Activated T-helper 1 cell treated with anti-CD3 and anti-CD28 coated beads, Interleukin-12 subunit alpha, Interleukin-12 subunit beta, Interleukin-2, Interleukin-4 antibody, amounts not matched to agents 30 ng/mL and 10 ng/mL and 1 ng/mL, durations not matched to agents 14 hours and 24 hours and 36 hours (primary cell): ENCODE measurements at regions of chr13 and their contacts with region 1.

Region 1: DNA sequence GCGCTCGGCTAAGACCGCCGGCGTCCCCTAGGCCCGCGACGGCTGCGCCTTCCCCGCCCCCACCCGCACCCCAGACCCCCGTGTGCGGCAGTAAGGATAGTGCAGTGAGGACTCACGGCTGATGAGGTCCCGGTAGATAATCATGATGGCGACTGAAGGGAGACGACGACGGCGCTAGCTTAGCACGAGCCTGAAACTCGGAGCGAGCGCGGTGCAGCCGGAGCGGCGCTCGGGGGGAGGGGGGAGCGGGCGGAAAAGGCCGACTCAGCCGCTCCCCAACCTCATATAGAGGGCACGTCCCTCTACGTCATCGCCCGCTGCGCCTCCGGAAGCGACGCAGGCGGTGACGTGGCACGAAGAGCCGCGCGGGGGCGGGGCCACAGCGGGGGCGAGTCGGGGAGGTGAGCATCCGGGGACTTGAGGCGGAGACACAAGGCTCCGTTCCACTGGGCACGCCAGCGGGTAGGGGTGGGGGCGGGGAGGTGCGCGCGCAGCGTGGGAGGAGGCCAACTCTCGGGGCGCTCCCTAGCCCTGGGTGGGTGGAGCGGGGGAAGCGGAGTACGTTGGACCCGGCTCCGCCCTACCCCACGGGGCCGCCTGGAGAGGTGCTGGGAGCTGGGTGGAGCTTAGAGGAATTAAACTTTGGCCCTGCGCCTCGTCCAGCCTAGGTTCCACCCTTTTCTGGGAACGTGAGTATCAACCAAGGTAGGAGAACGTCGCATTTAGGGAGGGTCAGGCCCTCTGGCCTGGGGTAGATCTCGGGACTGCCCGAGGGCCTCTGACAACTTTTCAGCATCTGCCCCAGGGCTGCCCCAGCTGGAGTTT is at the start of gene TPT1:
- DNase-seq: peak; percentile 99
- H3K4me3 Mint-ChIP-seq: peak within 1 kb of the TSS; percentile 99
- H3K27ac Mint-ChIP-seq: peak within 1 kb of the TSS; percentile 100
- H3K4me1 Mint-ChIP-seq: peaks cover 56% of the 10 kb centered on the region
- H3K27me3 Mint-ChIP-seq: no peaks in the 10 kb centered on the region
- total RNA-seq, gene TPT1: 2,353 and 2,360 TPM in 2 replicates

Region 2: DNA sequence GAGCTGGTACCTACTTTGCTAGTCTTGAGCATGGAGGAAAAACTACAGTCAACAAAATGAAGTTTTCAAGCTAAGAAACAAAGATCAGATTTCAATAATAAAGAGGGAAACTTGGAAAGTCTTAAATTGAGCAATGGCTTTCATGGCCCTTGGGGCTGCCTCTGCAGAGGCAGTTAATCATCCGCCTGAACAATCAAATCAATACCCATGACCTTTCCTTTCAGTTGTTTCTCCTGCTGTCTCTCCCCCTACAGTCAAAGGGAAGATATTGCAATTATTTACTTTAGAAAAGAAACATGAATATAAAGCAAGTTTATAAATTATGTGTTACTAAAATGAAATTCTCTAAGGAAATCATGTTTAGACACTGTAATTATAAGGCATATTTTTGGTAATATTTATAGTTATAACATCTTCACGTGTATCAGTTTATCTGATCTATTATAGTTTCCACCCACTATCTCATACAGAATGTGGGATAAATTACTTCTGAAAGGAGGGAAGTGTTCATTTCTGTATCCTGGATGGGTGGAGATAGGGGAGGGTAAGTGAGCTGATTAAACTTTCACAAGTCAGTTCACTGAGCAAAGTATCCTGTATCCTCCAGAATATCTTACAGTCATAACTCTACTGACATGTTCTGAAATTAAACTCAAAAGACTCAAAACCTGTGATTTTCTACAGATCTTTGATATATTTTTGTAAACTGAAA is 692.6 kb before region 1 on chr13:
- intact Hi-C with region 1: loop called (anchors 2 kb)
- DNase-seq: no peak
- H3K4me3 Mint-ChIP-seq: no peak overlapping the region
- H3K27ac Mint-ChIP-seq: peak overlapping the region; percentile 37
- H3K4me1 Mint-ChIP-seq: peaks cover 21% of the 10 kb centered on the region
- H3K27me3 Mint-ChIP-seq: peaks cover 9% of the 10 kb centered on the region

Region 3: DNA sequence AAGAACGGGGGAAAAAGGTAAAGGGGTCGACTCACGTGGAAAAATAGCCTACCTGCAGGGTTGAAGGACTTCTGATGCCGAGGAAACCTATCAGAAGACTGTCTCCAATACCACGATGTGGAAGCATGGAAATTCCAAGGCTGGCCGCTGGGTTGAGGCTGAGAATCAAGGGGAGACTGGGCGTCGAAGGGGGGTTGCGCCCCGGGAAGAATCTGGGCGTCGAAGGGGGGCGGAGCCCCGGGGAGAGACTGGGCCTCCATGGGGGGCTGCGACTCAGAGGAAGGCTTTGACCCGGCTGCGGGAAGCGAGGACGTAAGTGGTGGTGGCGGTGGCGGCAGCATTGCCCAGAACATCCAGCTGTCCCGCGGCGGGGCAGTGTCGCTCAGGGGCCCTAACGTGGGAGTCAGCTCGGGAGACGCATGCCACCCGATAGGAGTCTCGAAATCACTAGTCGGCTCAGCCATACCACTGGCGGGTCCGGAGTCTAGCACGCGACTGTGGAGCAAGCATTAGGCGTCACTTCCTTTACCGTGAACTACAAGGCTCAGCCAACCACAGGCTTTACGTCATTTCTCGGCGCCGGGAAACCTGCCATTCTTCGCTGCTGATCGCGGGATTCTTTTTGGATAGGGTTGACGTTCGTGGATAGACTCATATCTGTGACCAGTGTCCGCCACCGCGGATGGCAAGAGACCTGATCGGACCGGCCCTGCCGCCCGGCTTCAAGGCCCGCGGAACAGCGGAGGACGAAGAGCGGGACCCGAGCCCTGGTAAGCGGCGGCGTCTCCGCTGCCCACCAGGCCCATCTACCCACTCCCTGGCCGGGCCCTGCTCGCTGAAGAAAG is 351.9 kb before region 1 on chr13 and contains the starts of genes GPALPP1 and NUFIP1:
- intact Hi-C with region 1: loop called (anchors 1 kb)
- DNase-seq: peak; percentile 90
- H3K4me3 Mint-ChIP-seq: peak within 1 kb of the TSS; percentile 91
- H3K27ac Mint-ChIP-seq: peak within 1 kb of the TSS; percentile 91
- H3K4me1 Mint-ChIP-seq: peaks cover 43% of the 10 kb centered on the region
- H3K27me3 Mint-ChIP-seq: no peaks in the 10 kb centered on the region
- total RNA-seq, gene GPALPP1: 29.8 and 33.5 TPM in 2 replicates
- total RNA-seq, gene NUFIP1: 12.2 and 13.5 TPM in 2 replicates

Region 4: DNA sequence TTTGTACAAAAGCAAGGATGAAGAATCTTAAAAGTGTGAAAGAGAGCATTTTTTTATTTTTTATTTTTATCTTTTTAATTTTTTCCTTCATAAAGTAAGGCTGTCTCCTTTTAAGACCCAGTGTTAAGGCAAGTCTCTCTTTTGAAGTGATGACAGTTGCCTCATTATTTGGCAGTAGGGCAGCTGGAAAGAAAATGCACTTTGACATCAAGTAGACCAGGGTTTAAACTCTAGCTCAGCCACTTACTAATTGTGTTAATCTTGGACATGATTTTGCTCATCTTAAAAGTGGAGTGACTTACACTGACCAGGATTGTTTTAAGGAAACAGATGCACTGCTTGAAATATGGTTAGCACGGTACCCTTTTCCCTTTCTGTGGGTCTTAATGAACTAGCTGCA is 333.3 kb before region 1 on chr13:
- intact Hi-C with region 1: no loop called
- DNase-seq: no peak
- H3K4me3 Mint-ChIP-seq: no peak overlapping the region
- H3K27ac Mint-ChIP-seq: no peak overlapping the region
- H3K4me1 Mint-ChIP-seq: no peaks in the 10 kb centered on the region
- H3K27me3 Mint-ChIP-seq: no peaks in the 10 kb centered on the region

Region 5: DNA sequence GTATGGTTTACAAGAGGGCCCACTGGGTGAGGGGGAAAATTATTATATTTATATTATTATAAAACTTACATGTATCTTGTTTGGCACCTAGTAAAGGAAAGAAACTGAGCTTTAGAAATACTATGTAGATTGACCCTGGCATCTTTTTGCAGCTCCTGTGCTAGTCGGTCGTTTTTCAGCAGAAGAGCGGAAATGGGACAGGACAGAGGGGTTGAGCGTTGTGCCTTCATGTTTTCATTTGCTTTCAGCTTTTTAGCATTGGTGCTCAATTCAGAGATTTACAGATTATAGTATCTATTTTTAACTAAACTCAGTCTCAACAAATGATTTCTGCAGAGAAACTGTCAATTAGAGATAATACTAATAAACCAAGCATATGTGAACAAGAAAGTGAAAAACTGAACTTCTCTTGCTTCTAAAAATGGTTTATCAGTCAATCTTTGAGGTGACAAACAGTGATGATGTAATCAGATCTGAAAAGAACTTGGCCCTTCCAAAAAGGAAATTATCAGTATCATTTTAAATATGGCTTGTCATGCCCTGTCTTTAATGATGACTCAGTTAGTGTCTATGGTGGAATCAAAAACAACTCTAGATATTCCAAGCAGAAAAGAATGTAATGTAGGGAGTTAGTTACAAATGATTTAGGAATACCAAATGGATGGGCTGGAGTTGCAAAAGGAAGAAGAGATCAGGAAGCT is 83.3 kb before region 1 on chr13:
- intact Hi-C with region 1: no loop called
- DNase-seq: no peak
- H3K4me3 Mint-ChIP-seq: no peak overlapping the region
- H3K27ac Mint-ChIP-seq: no peak overlapping the region
- H3K4me1 Mint-ChIP-seq: peaks cover 20% of the 10 kb centered on the region
- H3K27me3 Mint-ChIP-seq: no peaks in the 10 kb centered on the region

Region 6: GRCh38 chr13:45310341-45311125 is 30.6 kb before region 1 on chr13:
- intact Hi-C with region 1: loop called (anchors 2 kb)
- DNase-seq: no peak
- H3K4me3 Mint-ChIP-seq: peak overlapping the region; percentile 78
- H3K27ac Mint-ChIP-seq: peak overlapping the region; percentile 44
- H3K4me1 Mint-ChIP-seq: peaks cover 18% of the 10 kb centered on the region
- H3K27me3 Mint-ChIP-seq: peaks cover 16% of the 10 kb centered on the region

Region 7: DNA sequence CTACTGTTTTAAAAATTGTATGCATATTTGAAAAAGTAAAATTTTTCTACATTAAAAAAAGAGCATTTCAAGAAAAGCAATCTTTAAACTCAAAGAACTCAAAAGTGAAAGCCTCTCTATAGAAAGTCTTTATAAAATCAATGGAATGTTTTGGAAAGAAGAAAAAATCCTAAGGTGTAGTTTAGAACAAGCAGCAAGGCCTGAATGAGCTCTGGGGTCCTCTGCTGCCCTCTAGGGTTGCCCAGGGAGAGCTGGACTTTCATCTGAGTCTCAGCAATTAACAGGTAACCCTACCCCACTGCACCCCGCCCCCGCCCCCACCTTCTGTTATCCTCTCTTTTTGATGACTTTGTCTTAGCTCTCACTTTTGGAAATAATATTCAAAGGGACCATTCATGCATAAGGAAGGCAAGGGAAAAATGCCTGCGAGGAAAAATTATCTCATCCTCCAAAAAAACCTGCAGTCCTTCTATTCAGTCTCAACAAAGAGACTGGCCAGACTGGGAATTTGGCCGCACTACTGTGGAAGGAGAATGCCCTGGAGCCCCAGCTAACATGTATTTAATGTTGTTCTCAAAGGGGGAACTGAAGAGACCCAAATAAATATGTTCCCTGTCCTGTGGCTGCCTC is 52.9 kb after region 1 on chr13:
- intact Hi-C with region 1: loop called (anchors 1 kb)
- DNase-seq: no peak
- H3K4me3 Mint-ChIP-seq: no peak overlapping the region
- H3K27ac Mint-ChIP-seq: no peak overlapping the region
- H3K4me1 Mint-ChIP-seq: peaks cover 51% of the 10 kb centered on the region
- H3K27me3 Mint-ChIP-seq: no peaks in the 10 kb centered on the region

Region 8: GRCh38 chr13:45464687-45465453 is 123.7 kb after region 1 on chr13 and contains the start of gene COG3:
- intact Hi-C with region 1: loop called (anchors 1 kb)
- DNase-seq: peak; percentile 94
- H3K4me3 Mint-ChIP-seq: peak within 1 kb of the TSS; percentile 95
- H3K27ac Mint-ChIP-seq: peak within 1 kb of the TSS; percentile 79
- H3K4me1 Mint-ChIP-seq: peaks cover 43% of the 10 kb centered on the region
- H3K27me3 Mint-ChIP-seq: peaks cover 11% of the 10 kb centered on the region
- total RNA-seq, gene COG3: 22.9 and 23.2 TPM in 2 replicates

Region 9: GRCh38 chr13:46184277-46184699 is 843.1 kb after region 1 on chr13:
- intact Hi-C with region 1: loop called (anchors 1 kb)
- DNase-seq: peak; percentile 64
- H3K4me3 Mint-ChIP-seq: peak overlapping the region; percentile 97
- H3K27ac Mint-ChIP-seq: peak overlapping the region; percentile 99
- H3K4me1 Mint-ChIP-seq: peaks cover 39% of the 10 kb centered on the region
- H3K27me3 Mint-ChIP-seq: no peaks in the 10 kb centered on the region